Activated T-helper 1 cell treated with anti-CD3 and anti-CD28 coated beads, Interleukin-12 subunit alpha, Interleukin-12 subunit beta, Interleukin-2, Interleukin-4 antibody, amounts not matched to agents 30 ng/mL and 10 ng/mL and 1 ng/mL, durations not matched to agents 14 hours and 24 hours and 36 hours (primary cell): ENCODE measurements at regions of chr20 and their contacts with region 1.

Region 1: DNA sequence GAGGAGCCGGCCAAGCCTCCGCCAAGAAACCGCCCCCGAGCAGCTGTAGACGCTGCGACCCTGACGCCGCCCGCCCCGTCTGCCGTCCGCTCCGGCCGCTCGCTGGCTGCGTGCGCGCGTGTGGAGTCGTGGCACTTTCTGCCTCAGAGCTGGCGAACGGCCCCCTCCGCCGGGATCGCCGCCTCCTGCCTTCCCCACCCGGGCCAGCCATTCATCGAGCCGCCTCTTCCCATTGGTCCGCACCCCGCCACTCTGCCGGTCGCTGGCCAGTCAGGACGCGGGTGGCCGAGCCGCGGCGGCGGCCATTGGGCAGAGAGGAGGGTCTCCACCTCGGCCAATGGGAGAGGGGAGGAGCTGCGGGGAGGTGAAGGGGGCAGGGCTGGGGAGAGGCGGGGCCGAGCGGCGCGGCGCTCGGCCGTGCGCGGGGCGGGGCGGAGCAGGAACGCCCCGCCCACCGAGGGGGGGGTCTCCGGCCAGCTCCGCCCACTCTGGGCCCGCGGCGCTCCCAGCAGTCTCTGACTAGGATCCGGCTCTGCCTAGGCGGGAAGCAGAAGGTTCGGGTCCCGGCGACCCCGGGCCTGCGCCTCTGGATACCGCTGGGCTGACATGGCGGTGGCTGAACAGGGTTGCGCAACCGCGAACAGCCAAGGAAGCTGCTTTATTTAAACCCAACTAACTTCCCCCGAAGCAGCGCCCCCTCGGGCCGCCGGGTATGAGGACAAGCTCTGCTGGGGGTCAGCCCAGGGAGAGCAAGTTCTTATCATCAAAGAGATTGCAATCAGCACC is at the start of gene RRBP1:
- DNase-seq: peak; percentile 97
- H3K4me3 Mint-ChIP-seq: peak within 1 kb of the TSS; percentile 88
- H3K27ac Mint-ChIP-seq: peak within 1 kb of the TSS; percentile 91
- H3K4me1 Mint-ChIP-seq: peaks cover 24% of the 10 kb centered on the region
- H3K27me3 Mint-ChIP-seq: peaks cover 26% of the 10 kb centered on the region
- total RNA-seq, gene RRBP1: 54.8 and 56.0 TPM in 2 replicates

Region 2: DNA sequence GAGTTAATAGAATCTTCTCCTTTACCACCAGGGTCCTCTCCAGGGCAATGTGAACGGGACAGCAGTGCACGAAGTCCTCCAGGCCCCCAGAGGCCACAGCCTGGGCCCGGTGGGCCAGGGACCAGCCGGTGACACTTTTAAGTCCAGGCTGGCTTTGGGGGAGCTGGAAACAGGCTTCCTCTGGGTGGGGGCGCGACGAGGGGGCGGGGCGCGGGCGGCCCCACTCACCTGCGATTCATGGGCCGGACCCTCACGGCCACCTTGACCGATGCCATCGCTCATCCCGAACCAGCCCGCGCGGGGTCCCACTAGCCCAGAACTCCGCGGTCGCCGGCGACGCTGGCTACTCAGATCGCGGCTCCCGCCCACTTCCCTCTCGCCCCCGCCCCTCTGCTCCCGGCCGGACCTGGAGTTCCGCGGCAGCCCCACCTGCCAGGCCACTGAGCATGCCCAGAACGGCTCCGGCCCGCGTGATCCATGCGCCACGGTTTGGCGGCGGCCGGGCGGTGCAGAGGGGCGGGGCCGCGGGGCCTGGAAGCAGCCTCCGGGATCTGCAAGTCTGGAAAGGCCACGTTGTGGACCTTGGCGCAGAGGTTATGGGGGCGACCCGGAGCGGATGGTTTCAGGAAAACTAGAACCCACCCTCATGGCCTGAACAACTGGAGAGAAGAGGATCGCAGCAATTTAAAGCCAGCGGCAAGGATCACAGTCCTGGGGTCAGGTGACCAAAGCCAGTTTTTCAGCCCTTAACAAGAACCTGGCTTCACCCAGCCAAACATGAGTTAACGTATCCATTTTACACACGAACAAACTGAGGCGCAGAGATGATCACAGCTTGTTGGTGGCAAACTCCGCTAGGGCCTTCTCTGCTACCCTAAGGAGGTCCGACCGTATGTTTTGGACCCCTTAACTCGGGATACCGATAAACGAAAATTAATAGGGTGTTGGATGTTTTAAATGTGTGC is 1109.0 kb before region 1 on chr20 and contains the start of gene KIF16B:
- intact Hi-C with region 1: loop called (anchors 5 kb)
- DNase-seq: peak; percentile 83
- H3K4me3 Mint-ChIP-seq: peak within 1 kb of the TSS; percentile 90
- H3K27ac Mint-ChIP-seq: peak within 1 kb of the TSS; percentile 91
- H3K4me1 Mint-ChIP-seq: peaks cover 36% of the 10 kb centered on the region
- H3K27me3 Mint-ChIP-seq: no peaks in the 10 kb centered on the region
- total RNA-seq, gene KIF16B: 7.2 and 8.1 TPM in 2 replicates

Region 3: DNA sequence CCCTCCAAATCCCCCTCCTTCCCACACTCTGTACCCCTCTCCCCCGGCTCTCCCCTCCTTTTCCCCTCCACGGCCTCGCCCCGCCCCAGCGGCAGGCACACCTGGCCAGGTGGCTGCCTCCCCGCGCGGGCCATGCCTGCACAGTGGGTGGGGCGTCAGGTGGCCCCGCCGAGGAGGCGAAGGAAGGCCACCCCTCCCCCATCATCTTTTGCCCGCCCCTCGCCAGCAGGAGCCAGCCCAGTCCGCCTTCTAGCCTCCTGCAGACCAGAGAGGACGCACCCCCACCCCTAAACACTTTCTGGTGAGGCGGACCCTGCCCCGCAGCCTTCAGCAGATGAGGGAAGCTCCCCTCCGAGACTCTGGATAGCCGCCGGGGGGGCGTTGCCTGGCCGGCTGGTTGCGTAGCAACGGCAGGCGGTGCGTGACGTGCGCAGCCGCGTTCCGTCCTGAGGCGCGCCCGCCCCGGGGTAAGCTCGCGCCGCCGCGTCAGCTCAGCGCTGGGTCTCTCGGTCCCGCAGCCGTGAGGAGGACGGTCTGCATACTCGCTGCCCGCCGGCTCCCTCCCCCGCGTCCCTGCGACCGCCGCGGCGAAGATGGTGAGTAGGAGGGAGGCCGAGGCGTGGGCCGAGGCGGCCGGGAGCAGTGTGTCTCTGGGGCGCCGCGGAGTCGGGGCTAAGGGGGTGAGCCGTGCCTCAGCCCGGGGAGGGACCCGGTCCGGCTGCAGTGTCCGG is 112.5 kb before region 1 on chr20 and contains the start of gene DSTN:
- intact Hi-C with region 1: loop called (anchors 1 kb)
- DNase-seq: peak; percentile 86
- H3K4me3 Mint-ChIP-seq: peak within 1 kb of the TSS; percentile 94
- H3K27ac Mint-ChIP-seq: peak within 1 kb of the TSS; percentile 93
- H3K4me1 Mint-ChIP-seq: peaks cover 19% of the 10 kb centered on the region
- H3K27me3 Mint-ChIP-seq: peaks cover 6% of the 10 kb centered on the region
- total RNA-seq, gene DSTN: 58.2 and 58.8 TPM in 2 replicates

Region 4: DNA sequence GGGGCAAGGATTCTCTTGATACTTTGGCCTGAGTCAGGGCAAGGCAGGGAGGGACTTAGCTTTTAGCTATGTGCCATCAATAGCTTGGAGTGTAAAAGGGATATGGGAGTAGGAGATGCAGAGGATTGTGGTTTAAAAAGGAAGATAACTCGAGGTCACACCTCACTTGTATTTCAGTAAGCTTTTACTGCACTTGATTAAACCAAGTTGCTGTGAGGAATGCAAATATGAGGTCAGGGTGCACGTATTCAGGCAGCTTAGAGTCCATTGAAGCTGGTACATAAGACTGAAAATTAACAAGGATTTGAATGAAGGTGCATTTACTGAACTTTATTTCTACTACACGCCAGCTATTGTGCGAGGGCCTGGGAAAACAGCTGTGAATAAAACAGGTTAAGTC is 80.3 kb before region 1 on chr20:
- intact Hi-C with region 1: no loop called
- DNase-seq: no peak
- H3K4me3 Mint-ChIP-seq: no peak overlapping the region
- H3K27ac Mint-ChIP-seq: no peak overlapping the region
- H3K4me1 Mint-ChIP-seq: peaks cover 7% of the 10 kb centered on the region
- H3K27me3 Mint-ChIP-seq: no peaks in the 10 kb centered on the region

Region 5: GRCh38 chr20:17636523-17637412 is 45.5 kb before region 1 on chr20:
- intact Hi-C with region 1: no loop called
- DNase-seq: no peak
- H3K4me3 Mint-ChIP-seq: no peak overlapping the region
- H3K27ac Mint-ChIP-seq: no peak overlapping the region
- H3K4me1 Mint-ChIP-seq: no peaks in the 10 kb centered on the region
- H3K27me3 Mint-ChIP-seq: no peaks in the 10 kb centered on the region

Region 6: DNA sequence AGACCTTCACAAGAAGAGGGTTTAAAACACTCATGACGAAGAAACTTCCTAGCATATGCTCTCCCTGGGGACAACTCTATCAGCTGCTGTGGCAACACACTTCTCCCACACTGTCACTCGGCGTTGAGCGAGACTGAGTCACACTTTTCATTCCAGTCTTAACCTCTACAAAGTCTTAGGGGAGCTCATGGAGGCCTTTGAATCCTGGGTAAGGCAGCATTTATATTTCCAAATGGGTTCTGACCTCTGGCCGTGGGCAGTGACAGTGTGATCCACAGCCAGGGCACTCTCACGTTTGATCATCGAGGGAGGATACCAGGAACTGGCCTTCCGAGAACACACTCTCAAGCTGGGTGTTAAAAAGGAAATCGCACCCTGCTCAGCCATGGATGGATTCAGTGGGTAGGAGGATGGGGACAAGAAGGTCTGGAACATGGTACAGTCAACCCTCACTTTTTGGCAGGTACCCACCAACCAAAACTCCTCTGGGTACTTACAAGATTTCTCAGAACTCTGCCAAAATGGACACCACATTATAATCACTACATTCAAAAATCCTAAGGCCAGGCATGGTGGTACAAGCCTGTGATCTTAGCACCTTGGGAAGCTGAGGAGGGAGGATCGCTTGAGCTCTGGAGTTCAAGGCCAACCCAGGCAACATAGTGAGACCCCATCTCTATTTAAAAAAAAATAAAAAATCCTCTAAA is 19.8 kb before region 1 on chr20:
- intact Hi-C with region 1: loop called (anchors 1 kb)
- DNase-seq: no peak
- H3K4me3 Mint-ChIP-seq: no peak overlapping the region
- H3K27ac Mint-ChIP-seq: peak overlapping the region; percentile 72
- H3K4me1 Mint-ChIP-seq: peaks cover 70% of the 10 kb centered on the region
- H3K27me3 Mint-ChIP-seq: no peaks in the 10 kb centered on the region

Region 7: GRCh38 chr20:17810062-17810598 is 127.8 kb after region 1 on chr20:
- intact Hi-C with region 1: no loop called
- DNase-seq: no peak
- H3K4me3 Mint-ChIP-seq: no peak overlapping the region
- H3K27ac Mint-ChIP-seq: no peak overlapping the region
- H3K4me1 Mint-ChIP-seq: no peaks in the 10 kb centered on the region
- H3K27me3 Mint-ChIP-seq: no peaks in the 10 kb centered on the region

Region 8: GRCh38 chr20:17843246-17844132 is 161.2 kb after region 1 on chr20:
- intact Hi-C with region 1: no loop called
- DNase-seq: peak; percentile 22
- H3K4me3 Mint-ChIP-seq: no peak overlapping the region
- H3K27ac Mint-ChIP-seq: no peak overlapping the region
- H3K4me1 Mint-ChIP-seq: peaks cover 22% of the 10 kb centered on the region
- H3K27me3 Mint-ChIP-seq: no peaks in the 10 kb centered on the region

Region 9: DNA sequence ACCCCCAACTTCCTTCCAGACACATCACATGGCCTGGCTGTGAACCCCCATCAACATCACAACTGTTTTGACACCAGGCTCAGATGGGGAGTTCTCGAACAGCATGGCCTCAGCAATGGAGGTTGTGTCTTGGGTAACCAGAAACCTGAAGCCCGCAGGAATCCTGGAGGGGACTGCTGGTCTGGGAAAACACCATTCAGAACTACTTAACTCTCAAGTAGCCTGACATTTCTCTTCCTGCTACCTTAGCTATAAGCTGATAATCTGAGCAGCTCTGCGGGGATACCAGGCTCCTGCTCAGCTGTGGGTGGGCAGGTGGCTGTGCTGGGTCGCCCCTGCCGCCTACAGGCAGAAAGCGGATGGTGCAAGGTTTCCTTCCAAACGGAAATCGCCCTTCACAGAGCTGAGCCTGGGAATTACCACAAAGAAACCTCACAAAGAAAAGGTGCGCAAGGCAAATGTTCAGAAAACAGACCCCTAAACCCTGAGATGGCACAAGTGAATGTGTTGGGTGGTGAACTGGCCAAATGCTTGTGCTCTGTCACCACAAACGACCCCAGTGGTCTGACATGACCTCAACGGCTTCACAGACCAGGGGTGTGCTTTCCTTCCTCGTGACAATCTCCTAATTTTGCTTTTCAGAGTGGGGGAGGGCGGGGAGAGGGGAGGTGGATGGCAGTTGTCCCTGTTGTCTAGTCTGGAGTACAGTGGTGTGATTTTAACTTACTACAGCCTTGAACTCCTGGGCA is 256.7 kb after region 1 on chr20:
- intact Hi-C with region 1: loop called (anchors 1 kb)
- DNase-seq: peak; percentile 26
- H3K4me3 Mint-ChIP-seq: no peak overlapping the region
- H3K27ac Mint-ChIP-seq: peak overlapping the region; percentile 81
- H3K4me1 Mint-ChIP-seq: peaks cover 34% of the 10 kb centered on the region
- H3K27me3 Mint-ChIP-seq: no peaks in the 10 kb centered on the region

Region 10: GRCh38 chr20:18566892-18567742 is 884.8 kb after region 1 on chr20 and contains the start of gene SMIM26:
- intact Hi-C with region 1: loop called (anchors 5 kb)
- DNase-seq: peak; percentile 91
- H3K4me3 Mint-ChIP-seq: peak within 1 kb of the TSS; percentile 95
- H3K27ac Mint-ChIP-seq: peak within 1 kb of the TSS; percentile 95
- H3K4me1 Mint-ChIP-seq: peaks cover 10% of the 10 kb centered on the region
- H3K27me3 Mint-ChIP-seq: no peaks in the 10 kb centered on the region
- total RNA-seq, gene SMIM26: 54.9 and 57.9 TPM in 2 replicates